MCF 10A (cell line): ENCODE measurements at regions of chr12 and their contacts with region 1.

Region 1: GRCh38 chr12:38921025-38921677 is 15.8 kb upstream of the CPNE8 start:
- DNase-seq: peak; percentile 84
- H3K4me3 Mint-ChIP-seq: no peak overlapping the region
- H3K27ac Mint-ChIP-seq: no peak overlapping the region
- H3K4me1 Mint-ChIP-seq: peaks cover 7% of the 10 kb centered on the region
- H3K27me3 Mint-ChIP-seq: no peaks in the 10 kb centered on the region
- CTCF ChIP-seq: peak; percentile 71

Region 2: DNA sequence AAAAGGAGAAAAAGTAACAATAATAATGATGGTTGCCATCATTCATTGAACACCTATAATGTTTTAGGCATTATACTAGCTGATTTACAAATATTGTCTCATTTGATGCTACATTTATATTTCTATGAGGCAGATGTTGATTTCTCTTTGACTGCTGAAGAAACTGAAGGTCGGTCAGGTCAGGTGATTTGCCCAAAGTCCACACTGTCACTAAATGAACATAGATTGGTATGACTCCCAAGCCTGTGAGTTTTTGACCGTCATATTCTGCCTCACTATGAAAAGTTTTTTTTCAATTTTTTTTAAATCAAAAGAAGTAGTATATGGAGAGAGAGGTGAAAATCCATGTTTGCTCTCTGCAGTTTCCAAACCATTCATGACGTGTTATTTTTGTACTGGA is 593.8 kb before region 1 on chr12:
- CTCF ChIA-PET with region 1: interaction called, 10 read pairs
- POLR2A ChIA-PET with region 1: interaction called, 3 read pairs
- intact Hi-C with region 1: no loop called
- DNase-seq: no peak
- H3K4me3 Mint-ChIP-seq: no peak overlapping the region
- H3K27ac Mint-ChIP-seq: no peak overlapping the region
- H3K4me1 Mint-ChIP-seq: no peaks in the 10 kb centered on the region
- H3K27me3 Mint-ChIP-seq: no peaks in the 10 kb centered on the region
- CTCF ChIP-seq: no peak

Region 3: GRCh38 chr12:38850476-38850875 is 70.7 kb before region 1 on chr12:
- CTCF ChIA-PET with region 1: no interaction called
- POLR2A ChIA-PET with region 1: no interaction called
- intact Hi-C with region 1: no loop called
- DNase-seq: no peak
- H3K4me3 Mint-ChIP-seq: no peak overlapping the region
- H3K27ac Mint-ChIP-seq: no peak overlapping the region
- H3K4me1 Mint-ChIP-seq: no peaks in the 10 kb centered on the region
- H3K27me3 Mint-ChIP-seq: no peaks in the 10 kb centered on the region
- CTCF ChIP-seq: no peak

Region 4: DNA sequence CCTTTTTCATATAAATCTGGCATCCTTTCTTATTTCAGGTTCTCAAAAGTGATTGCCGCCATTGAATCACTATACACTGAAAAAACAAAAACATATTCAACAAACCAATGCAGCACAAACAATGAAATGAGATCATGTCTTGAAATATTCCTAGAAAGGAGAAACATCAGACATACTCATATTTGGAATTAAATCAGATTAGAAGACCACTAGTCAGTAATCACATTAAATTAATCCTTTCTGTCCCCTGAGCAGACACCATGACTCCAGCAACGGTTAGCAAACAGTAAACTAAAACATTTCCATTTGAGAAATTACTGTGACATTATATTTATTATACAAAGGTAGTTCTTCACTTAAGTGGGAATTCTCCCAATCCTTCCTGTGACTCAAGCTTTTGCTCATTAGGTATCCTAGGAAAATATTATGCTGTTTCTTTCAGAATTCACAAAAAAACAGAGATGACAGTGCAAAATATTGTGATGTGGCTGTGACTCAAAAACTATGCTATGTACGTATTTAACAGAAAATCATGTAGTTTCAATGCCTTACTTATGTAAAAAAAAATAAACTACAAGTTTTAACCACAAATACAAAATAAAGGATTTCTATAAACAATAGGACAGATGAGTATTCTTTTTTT is 45.4 kb before region 1 on chr12:
- CTCF ChIA-PET with region 1: no interaction called
- POLR2A ChIA-PET with region 1: no interaction called
- intact Hi-C with region 1: no loop called
- DNase-seq: no peak
- H3K4me3 Mint-ChIP-seq: no peak overlapping the region
- H3K27ac Mint-ChIP-seq: no peak overlapping the region
- H3K4me1 Mint-ChIP-seq: peaks cover 6% of the 10 kb centered on the region
- H3K27me3 Mint-ChIP-seq: no peaks in the 10 kb centered on the region
- CTCF ChIP-seq: no peak

Region 5: GRCh38 chr12:38934686-38935085 is 13.5 kb after region 1 on chr12:
- CTCF ChIA-PET with region 1: interaction called, 11 read pairs
- POLR2A ChIA-PET with region 1: no interaction called
- intact Hi-C with region 1: no loop called
- DNase-seq: no peak
- H3K4me3 Mint-ChIP-seq: no peak overlapping the region
- H3K27ac Mint-ChIP-seq: no peak overlapping the region
- H3K4me1 Mint-ChIP-seq: peaks cover 5% of the 10 kb centered on the region
- H3K27me3 Mint-ChIP-seq: no peaks in the 10 kb centered on the region
- CTCF ChIP-seq: no peak

Region 6: DNA sequence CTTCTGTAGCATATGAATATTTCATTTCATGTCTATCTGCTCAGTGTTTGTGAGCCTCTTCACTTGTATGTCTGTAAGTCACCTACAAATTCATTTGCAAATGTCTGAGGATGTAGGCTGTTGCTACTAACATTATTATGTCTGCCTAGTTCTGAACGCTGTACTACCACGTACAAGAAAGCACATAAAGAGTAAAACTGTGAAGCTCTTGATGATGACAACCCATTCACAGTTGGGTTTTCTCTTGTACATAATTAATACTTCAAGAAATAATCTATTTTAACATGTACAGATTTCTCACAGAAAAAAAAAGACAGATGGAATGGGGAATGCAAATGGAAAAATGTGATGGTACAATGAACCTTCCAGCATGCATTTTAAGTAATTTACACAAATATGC is 48.6 kb after region 1 on chr12:
- CTCF ChIA-PET with region 1: no interaction called
- POLR2A ChIA-PET with region 1: no interaction called
- intact Hi-C with region 1: no loop called
- DNase-seq: no peak
- H3K4me3 Mint-ChIP-seq: no peak overlapping the region
- H3K27ac Mint-ChIP-seq: no peak overlapping the region
- H3K4me1 Mint-ChIP-seq: no peaks in the 10 kb centered on the region
- H3K27me3 Mint-ChIP-seq: no peaks in the 10 kb centered on the region
- CTCF ChIP-seq: no peak

Region 7: DNA sequence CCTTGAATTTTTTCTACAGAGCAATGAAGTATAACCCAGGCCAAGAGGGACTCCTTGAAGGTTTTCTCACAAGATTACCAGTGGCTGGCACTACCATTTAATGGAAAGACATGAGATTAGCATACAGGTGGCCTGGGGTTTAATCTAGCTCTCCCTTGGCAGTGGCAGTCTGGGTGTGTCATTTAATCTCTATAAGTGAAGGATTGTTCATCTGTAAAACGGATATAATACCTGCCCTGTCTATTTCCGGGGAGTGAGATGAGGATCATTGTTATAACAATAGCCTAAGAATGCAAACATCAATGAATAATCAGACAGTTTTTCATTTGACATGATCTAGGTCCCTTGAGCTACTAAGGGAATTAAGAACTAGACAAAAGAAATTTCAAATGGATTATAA is 152.9 kb after region 1 on chr12:
- CTCF ChIA-PET with region 1: interaction called, 6 read pairs
- POLR2A ChIA-PET with region 1: interaction called, 10 read pairs
- intact Hi-C with region 1: no loop called
- DNase-seq: no peak
- H3K4me3 Mint-ChIP-seq: no peak overlapping the region
- H3K27ac Mint-ChIP-seq: no peak overlapping the region
- H3K4me1 Mint-ChIP-seq: peaks cover 12% of the 10 kb centered on the region
- H3K27me3 Mint-ChIP-seq: no peaks in the 10 kb centered on the region
- CTCF ChIP-seq: no peak

Region 8: GRCh38 chr12:39605501-39605900 is 684.4 kb after region 1 on chr12:
- CTCF ChIA-PET with region 1: no interaction called
- POLR2A ChIA-PET with region 1: no interaction called
- intact Hi-C with region 1: no loop called
- DNase-seq: peak; percentile 82
- H3K4me3 Mint-ChIP-seq: peak overlapping the region; percentile 20
- H3K27ac Mint-ChIP-seq: peak overlapping the region; percentile 72
- H3K4me1 Mint-ChIP-seq: peaks cover 16% of the 10 kb centered on the region
- H3K27me3 Mint-ChIP-seq: no peaks in the 10 kb centered on the region
- CTCF ChIP-seq: no peak